MCF 10A (cell line): ENCODE measurements at regions of chr9 and their contacts with region 1.

Region 1: GRCh38 chr9:135864447-135865049 is 42.8 kb downstream of the CAMSAP1 start:
- DNase-seq: peak; percentile 65
- H3K4me3 Mint-ChIP-seq: no peak overlapping the region
- H3K27ac Mint-ChIP-seq: no peak overlapping the region
- H3K4me1 Mint-ChIP-seq: no peaks in the 10 kb centered on the region
- H3K27me3 Mint-ChIP-seq: no peaks in the 10 kb centered on the region
- CTCF ChIP-seq: peak; percentile 66

Region 2: DNA sequence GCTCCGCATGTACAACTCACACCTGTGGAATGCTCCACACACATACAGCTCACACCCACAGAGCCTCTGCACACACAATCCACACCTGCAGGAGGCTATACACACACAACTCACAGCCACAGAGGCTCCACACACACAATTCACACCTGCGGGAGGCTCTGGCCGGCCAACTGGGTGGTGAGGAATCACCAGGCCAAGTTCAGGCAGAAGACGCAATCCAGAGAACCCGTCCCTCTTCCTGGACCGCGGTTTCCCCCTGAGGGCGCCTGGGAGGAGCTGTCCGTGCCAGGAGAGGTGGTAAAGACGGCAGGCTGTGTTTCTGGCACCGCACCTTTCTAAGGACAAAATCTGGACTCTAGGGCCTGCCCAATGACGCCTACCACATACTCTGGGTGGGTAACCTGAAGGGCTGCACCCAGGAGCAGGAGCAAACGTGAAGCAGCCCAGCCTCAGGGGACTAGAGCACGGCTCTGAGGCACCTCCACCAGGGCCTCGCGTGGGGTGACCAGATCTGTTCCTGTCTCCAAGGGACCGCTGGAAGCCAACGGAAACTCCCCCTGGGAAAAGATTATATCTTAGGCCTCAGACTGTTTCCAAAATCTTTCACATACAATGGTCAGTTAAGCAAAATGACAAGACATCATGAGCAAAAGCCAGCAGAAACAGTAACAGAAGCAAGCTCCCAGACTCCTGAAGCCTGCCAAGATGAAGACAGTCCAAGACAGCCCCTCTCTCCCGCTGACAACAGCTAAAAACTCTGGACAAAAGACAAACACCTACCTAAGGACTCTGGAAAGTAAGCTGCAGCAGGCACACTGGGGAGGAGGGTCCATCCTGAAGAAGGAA is 25.9 kb after region 1 on chr9:
- CTCF ChIA-PET with region 1: interaction called, 18 read pairs
- POLR2A ChIA-PET with region 1: interaction called, 3 read pairs
- intact Hi-C with region 1: no loop called
- DNase-seq: peak; percentile 81
- H3K4me3 Mint-ChIP-seq: peak overlapping the region; percentile 50
- H3K27ac Mint-ChIP-seq: peak overlapping the region; percentile 72
- H3K4me1 Mint-ChIP-seq: peaks cover 69% of the 10 kb centered on the region
- H3K27me3 Mint-ChIP-seq: no peaks in the 10 kb centered on the region
- CTCF ChIP-seq: no peak

Region 3: GRCh38 chr9:135951889-135952663 is 87.5 kb after region 1 on chr9:
- CTCF ChIA-PET with region 1: no interaction called
- POLR2A ChIA-PET with region 1: no interaction called
- intact Hi-C with region 1: loop called (anchors 2 kb)
- DNase-seq: peak; percentile 95
- H3K4me3 Mint-ChIP-seq: peak overlapping the region; percentile 38
- H3K27ac Mint-ChIP-seq: peak overlapping the region; percentile 80
- H3K4me1 Mint-ChIP-seq: peaks cover 32% of the 10 kb centered on the region
- H3K27me3 Mint-ChIP-seq: no peaks in the 10 kb centered on the region
- CTCF ChIP-seq: no peak